ENCODE measurements at regions of chr15 and their contacts with region 1.

Region 1: GRCh38 chr15:44536962-44537734 is at the start of gene EIF3J:
- DNase-seq: peak; percentile 94 to 96
- ATAC-seq: peak; percentile 88 to 90
- H3K4me3 ChIP-seq: peak within 1 kb of the TSS; percentile 67 to 99 (median 89)
- H3K27ac ChIP-seq: peak within 1 kb of the TSS; percentile 90 to 99 (median 94)
- H3K4me1 ChIP-seq: peaks cover 38 to 48% of the 10 kb centered on the region in 2 donors
- H3K27me3 ChIP-seq: no peaks in the 10 kb centered on the region
- CTCF ChIP-seq: no peak
- POLR2A ChIP-seq: peak; percentile 84 to 97
- total RNA-seq, gene EIF3J: 79.2 to 122 (median 103) TPM

Region 2: GRCh38 chr15:43791993-43792760 is 745.0 kb before region 1 on chr15 and contains the start of gene SERF2:
- in situ Hi-C with region 1: no loop called
- intact Hi-C with region 1: loop called (anchors 10 kb)
- DNase-seq: peak; percentile 100
- ATAC-seq: peak; percentile 83 to 91
- H3K4me3 ChIP-seq: peak within 1 kb of the TSS; percentile 91 to 100 (median 94)
- H3K27ac ChIP-seq: peak within 1 kb of the TSS; percentile 96 to 100 (median 99)
- H3K4me1 ChIP-seq: peaks cover 40 to 46% of the 10 kb centered on the region in 2 donors
- H3K27me3 ChIP-seq: no peaks in the 10 kb centered on the region
- CTCF ChIP-seq: no peak
- POLR2A ChIP-seq: peak; percentile 99
- total RNA-seq, gene SERF2: 491 to 646 (median 617) TPM

Region 3: DNA sequence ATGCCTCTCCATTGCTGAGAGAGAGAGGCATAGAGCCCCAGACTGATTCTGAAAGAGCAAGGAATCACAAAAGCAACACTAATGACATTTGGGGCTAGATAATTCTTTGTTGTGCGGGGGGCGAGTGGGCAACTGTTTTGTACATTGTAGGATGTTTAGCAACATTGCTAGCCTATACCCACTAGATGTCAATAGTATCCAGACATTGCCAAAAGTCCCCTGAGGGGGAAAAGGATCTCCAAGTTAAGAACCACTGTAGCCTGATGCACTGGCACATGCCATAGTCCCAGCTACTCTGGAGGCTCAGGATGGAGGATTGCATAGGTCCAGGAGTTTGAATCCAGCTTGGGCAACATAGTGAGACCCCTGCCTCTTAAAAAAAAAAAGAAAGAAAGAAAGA is 271.4 kb before region 1 on chr15:
- in situ Hi-C with region 1: no loop called
- intact Hi-C with region 1: no loop called
- DNase-seq: no peak
- ATAC-seq: no peak
- H3K4me3 ChIP-seq: no peak overlapping the region
- H3K27ac ChIP-seq: no peak overlapping the region
- H3K4me1 ChIP-seq: no peaks in the 10 kb centered on the region
- H3K27me3 ChIP-seq: no peaks in the 10 kb centered on the region
- CTCF ChIP-seq: no peak
- POLR2A ChIP-seq: no peak

Region 4: GRCh38 chr15:44286814-44287452 is 250.2 kb before region 1 on chr15:
- in situ Hi-C with region 1: no loop called
- intact Hi-C with region 1: loop called (anchors 2 kb)
- DNase-seq: no peak
- ATAC-seq: no peak
- H3K4me3 ChIP-seq: peak overlapping the region; percentile 68 to 91 (median 80)
- H3K27ac ChIP-seq: peak overlapping the region in 2 of 4 donors; percentile 83 to 90
- H3K4me1 ChIP-seq: peaks cover 21 to 23% of the 10 kb centered on the region in 2 donors
- H3K27me3 ChIP-seq: peaks cover 0 to 5% (median 0%) of the 10 kb centered on the region in 3 donors
- CTCF ChIP-seq: peak in 2 of 5 experiments; percentile 10 to 32
- POLR2A ChIP-seq: no peak

Region 5: DNA sequence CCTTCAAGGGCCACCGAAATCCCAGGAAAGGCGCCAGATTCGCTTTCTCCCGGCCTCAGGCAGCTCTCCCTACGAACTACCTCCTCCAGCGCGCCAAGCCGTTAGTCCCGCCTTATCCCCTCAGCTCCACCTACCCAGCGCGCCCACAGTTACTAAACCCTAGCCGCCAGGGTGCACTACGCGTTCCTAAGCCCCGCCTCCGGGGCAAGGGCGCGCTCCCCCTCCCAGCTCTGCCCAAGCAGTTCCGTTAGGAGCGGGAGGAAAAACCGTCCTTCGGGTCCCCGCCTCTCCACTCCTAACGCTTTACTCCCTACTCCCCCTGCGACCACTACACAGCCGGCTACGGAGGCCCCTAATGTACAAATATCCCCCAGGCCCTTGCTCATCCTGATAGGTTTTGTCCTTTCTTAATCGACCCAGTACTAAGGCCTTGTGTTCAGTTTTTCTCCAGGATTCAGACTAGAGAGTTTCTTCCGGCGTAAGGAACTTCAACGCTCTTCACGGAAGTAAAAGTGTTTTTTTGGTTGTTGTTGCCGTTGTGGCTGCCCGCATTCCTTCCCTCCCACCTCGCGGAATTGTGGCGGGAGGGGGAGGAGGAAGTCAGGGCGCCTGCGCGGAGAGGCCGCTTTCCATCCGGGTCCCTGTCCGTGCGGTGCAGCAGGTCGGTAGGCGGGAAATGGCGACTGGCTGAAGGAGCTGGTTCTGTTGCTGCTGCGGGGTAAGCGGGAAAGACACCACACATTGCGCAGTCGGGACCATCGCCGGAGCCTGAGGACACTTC is 110.0 kb before region 1 on chr15 and contains the start of gene CTDSPL2:
- in situ Hi-C with region 1: loop called in 1 of 4 experiments (anchors 10 kb)
- intact Hi-C with region 1: loop called (anchors 1 kb)
- DNase-seq: peak; percentile 98 to 99
- ATAC-seq: peak; percentile 90 to 95
- H3K4me3 ChIP-seq: peak within 1 kb of the TSS; percentile 91 to 96 (median 94)
- H3K27ac ChIP-seq: peak within 1 kb of the TSS; percentile 93 to 99 (median 94)
- H3K4me1 ChIP-seq: peaks cover 19 to 28% of the 10 kb centered on the region in 2 donors
- H3K27me3 ChIP-seq: no peaks in the 10 kb centered on the region
- CTCF ChIP-seq: peak in 3 of 5 experiments; percentile 24 to 43 (median 28)
- POLR2A ChIP-seq: peak; percentile 36 to 54
- total RNA-seq, gene CTDSPL2: 18.3 to 26.1 (median 24.5) TPM

Region 6: GRCh38 chr15:44663409-44664308 is 126.5 kb after region 1 on chr15 and contains the start of gene SPG11:
- in situ Hi-C with region 1: no loop called
- intact Hi-C with region 1: loop called (anchors 5 kb)
- DNase-seq: peak; percentile 95 to 98
- ATAC-seq: peak; percentile 96 to 97
- H3K4me3 ChIP-seq: peak within 1 kb of the TSS; percentile 94 to 98 (median 96)
- H3K27ac ChIP-seq: peak within 1 kb of the TSS; percentile 95 to 99 (median 98)
- H3K4me1 ChIP-seq: peaks cover 21 to 25% of the 10 kb centered on the region in 2 donors
- H3K27me3 ChIP-seq: no peaks in the 10 kb centered on the region
- CTCF ChIP-seq: peak; percentile 93 to 98 (median 96)
- POLR2A ChIP-seq: peak; percentile 92 to 96
- total RNA-seq, gene SPG11: 32.8 to 51.7 (median 43.2) TPM

Region 7: DNA sequence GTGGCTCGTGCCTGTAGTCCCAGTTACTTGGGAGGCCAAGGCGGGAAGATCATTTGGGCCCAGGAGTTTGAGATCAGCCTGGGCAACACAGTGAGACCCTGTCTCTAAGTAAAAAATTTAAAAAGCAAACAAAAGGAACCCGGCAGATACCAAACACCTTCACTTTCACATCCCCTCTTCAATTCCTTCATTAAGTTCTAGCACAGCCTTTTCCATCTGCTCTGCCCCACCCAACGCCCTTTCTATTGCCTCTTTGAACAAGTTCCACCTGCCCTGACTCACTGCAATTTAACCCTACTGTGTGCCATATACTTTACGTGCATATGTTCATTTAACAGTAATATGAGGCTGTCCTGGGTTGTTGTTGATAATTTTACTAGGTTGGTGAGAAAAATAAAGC is 138.8 kb after region 1 on chr15:
- in situ Hi-C with region 1: no loop called
- intact Hi-C with region 1: no loop called
- DNase-seq: no peak
- ATAC-seq: no peak
- H3K4me3 ChIP-seq: no peak overlapping the region
- H3K27ac ChIP-seq: no peak overlapping the region
- H3K4me1 ChIP-seq: no peaks in the 10 kb centered on the region
- H3K27me3 ChIP-seq: no peaks in the 10 kb centered on the region
- CTCF ChIP-seq: no peak
- POLR2A ChIP-seq: no peak

Region 8: DNA sequence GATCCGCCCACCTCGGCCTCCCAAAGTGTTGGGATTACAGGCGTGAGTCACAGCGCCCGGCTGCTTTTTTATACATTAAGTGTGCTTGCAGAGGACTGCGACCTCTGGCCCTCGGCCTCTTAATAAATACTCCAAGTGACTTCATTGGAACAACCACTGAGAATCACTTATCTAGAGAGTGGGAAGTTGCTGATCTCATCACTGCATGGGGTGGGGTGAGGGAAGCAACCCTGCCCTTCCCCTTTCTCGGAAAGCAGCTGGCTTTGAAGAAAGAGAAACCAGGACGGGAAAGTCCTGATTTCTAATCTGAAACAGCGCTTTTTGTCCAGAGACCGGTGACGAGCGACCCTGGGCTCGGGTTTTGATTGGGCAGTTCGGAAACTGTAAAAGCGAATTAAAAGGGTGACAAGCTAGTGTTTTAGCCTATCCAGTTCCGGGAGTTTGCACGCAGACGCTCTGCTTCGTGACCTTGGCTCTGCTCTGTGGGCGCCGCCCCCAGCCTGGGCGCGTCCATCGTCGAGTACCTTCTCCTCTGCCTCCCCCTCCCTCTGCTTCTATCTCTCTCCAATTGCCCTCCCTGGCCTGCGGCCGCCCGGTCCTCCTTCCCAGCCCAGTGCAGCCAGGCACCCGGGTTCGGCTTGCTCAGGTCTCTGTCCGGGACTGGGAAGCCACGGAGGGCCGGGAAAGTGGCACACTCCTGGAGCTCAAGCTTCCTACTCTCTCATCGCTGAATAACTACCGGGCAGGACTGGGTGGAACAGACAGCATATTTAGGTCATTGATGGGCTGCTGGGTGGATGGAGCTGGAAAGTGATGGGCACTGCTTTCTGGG is 191.6 kb after region 1 on chr15:
- in situ Hi-C with region 1: no loop called
- intact Hi-C with region 1: loop called (anchors 5 kb)
- DNase-seq: peak; percentile 90 to 96
- ATAC-seq: peak; percentile 98
- H3K4me3 ChIP-seq: peak overlapping the region; percentile 60 to 98 (median 84)
- H3K27ac ChIP-seq: peak overlapping the region; percentile 87 to 100 (median 96)
- H3K4me1 ChIP-seq: peaks cover 16 to 24% of the 10 kb centered on the region in 2 donors
- H3K27me3 ChIP-seq: no peaks in the 10 kb centered on the region
- CTCF ChIP-seq: no peak
- POLR2A ChIP-seq: peak; percentile 80 to 87

Region 9: DNA sequence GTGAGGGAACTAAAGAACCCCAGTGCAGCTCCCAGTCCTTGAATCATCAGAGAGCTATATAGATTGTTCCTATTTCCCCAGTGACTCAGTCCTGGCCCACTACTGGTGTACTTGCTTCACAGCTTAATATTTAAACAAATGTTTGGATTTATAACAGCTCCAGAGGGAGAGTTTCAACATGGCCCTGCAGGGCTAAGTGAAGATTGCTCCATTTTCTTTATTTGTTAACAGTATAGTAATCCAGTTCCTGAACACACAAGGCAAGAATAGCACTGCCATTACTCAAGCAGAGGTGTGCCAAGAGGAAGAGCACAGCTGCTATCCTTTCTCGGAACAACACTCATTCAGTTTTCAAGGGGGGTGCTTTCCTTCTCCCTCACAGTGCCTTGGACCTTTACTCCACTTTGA is 1104.2 kb after region 1 on chr15:
- in situ Hi-C with region 1: no loop called
- intact Hi-C with region 1: loop called (anchors 10 kb)
- DNase-seq: peak; percentile 81 to 87
- ATAC-seq: peak; percentile 88
- H3K4me3 ChIP-seq: peak overlapping the region in 1 of 4 donors; percentile 30
- H3K27ac ChIP-seq: peak overlapping the region; percentile 98 to 99 (median 98)
- H3K4me1 ChIP-seq: peaks cover 82 to 92% of the 10 kb centered on the region in 2 donors
- H3K27me3 ChIP-seq: no peaks in the 10 kb centered on the region
- CTCF ChIP-seq: no peak
- POLR2A ChIP-seq: peak; percentile 21 to 34